ENCODE measurements at regions of chr3 and their contacts with region 1.

Region 1: GRCh38 chr3:52407779-52408178 is 37.1 kb downstream of the SEMA3G start:
- DNase-seq: no peak
- H3K4me3 Mint-ChIP-seq: peak overlapping the region; percentile 95
- H3K27ac Mint-ChIP-seq: peak overlapping the region; percentile 94
- H3K4me1 Mint-ChIP-seq: peaks cover 36% of the 10 kb centered on the region
- H3K27me3 Mint-ChIP-seq: no peaks in the 10 kb centered on the region

Region 2: DNA sequence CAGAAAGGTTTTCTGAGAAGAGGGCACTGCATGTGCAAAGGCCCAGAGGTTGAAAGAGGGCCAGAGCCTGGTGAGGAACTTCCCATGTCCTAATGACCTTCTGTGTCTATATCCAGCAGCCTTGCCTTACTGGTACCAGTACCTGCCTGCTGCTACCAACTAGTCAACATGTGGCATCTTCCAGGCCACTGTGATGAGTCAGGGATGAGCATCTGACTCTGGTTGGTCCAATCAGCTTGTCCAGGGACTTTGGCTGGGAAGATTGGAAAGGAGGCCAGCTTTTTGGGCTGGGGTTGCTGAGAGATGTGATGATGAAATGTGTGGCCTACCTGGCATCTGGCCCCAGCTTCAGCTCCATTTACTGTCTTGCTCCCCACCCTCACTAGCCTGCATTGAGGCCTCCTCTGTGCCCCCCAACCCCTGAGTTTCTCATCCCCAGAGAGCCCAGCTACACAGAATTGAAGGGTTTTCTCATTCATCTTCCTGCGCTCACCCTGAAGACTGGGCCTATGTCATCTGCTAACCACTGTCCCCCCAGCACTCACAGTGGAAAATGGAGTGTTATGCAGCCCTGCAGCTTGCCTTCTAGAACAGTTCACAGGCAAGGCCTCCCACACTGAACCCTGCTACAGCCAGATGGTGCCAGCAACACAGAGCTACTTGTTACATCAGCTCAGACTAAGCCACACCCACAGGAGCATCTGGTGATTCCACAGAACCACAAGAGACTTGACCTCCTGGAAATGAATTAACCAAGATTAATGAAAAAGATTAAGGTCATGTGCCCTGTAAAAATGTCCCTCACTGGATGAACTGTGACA is 167.5 kb before region 1 on chr3:
- intact Hi-C with region 1: no loop called
- DNase-seq: peak; percentile 86
- H3K4me3 Mint-ChIP-seq: peak overlapping the region; percentile 93
- H3K27ac Mint-ChIP-seq: peak overlapping the region; percentile 99
- H3K4me1 Mint-ChIP-seq: peaks cover 67% of the 10 kb centered on the region
- H3K27me3 Mint-ChIP-seq: no peaks in the 10 kb centered on the region

Region 3: DNA sequence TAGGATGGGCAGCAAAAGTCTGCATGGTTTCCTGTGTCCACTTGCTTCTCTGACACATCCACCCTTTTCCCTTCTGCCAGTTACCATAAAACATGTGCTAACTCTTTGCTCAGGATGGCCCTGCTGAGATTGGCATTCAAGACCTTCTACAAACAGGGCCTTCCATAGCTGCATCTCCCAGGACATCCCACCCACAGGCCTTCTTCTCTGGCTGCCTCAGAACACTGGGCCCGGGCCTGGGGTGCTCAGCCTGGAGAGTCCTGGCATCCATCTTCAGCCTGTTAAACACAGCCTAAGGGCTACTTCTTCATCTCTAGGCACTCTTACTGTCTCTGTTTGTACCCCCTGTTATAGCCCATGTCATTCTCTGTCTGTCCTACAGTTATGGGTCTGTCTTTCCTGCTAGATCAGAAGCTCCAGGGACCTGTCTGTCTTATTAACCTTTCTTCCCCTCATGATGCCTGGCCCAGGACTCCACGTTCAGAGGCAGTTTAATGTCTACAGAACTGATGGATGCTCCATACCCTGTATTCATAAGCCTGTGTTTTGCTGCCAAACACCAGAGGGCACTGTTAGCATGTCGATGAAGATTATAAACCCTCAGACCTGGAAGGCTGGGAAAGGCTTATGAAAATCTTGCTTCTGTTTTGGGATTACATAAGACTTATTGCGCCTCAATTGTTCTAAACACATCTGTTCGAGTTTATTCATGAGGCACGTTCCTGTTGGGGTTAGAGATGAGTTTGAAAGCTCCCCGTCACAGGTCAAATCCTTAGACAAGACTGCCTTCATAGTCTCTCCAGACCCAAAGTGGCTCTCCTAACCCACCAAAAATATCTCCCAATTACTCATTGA is 20.6 kb after region 1 on chr3:
- intact Hi-C with region 1: loop called (anchors 2 kb)
- DNase-seq: peak; percentile 82
- H3K4me3 Mint-ChIP-seq: no peak overlapping the region
- H3K27ac Mint-ChIP-seq: no peak overlapping the region
- H3K4me1 Mint-ChIP-seq: peaks cover 1% of the 10 kb centered on the region
- H3K27me3 Mint-ChIP-seq: peaks cover 17% of the 10 kb centered on the region

Region 4: DNA sequence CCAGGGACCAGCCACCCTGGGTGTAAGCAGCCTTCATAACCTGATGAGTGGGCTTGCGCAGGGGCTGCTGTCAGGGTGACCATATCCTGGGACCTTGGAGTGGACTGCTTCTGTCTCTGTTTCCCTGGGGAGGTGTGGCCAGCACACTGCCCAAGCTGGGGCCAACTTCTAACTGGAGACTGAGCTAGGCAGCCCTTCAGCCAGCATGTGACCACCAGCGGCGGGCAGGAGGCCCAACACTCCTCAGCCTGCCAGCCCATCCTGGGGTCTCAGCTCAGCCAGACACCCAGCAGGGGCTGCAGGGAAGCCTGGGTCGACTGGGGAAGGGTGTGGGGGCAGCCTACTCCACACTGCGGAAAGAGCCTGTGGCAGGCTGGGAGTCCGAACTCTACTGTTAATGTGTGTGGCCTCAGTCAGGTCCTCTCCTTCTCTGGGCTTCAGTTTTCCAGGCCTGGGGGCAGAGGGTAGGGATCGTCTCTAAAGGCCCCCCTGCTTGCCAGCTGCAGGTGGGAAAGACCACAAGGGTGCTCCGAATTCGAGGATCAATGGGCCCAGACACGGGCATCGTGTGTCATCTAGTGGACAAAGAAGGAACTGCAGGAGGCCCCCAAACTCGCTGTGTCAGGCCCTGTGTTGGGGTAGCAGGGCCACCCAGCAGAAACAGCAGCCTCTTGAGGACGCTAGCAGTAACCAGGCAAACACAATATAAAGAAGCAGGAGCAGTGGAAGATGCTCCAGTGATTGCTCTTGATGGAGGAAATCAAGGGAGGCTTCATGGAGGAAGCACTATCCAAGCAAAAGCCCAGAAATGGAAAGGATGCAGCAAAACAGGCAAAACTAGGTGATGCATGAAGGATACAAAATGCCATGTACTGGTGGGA is 39.1 kb after region 1 on chr3:
- intact Hi-C with region 1: loop called (anchors 1 kb)
- DNase-seq: peak; percentile 93
- H3K4me3 Mint-ChIP-seq: no peak overlapping the region
- H3K27ac Mint-ChIP-seq: peak overlapping the region; percentile 79
- H3K4me1 Mint-ChIP-seq: peaks cover 6% of the 10 kb centered on the region
- H3K27me3 Mint-ChIP-seq: no peaks in the 10 kb centered on the region

Region 5: DNA sequence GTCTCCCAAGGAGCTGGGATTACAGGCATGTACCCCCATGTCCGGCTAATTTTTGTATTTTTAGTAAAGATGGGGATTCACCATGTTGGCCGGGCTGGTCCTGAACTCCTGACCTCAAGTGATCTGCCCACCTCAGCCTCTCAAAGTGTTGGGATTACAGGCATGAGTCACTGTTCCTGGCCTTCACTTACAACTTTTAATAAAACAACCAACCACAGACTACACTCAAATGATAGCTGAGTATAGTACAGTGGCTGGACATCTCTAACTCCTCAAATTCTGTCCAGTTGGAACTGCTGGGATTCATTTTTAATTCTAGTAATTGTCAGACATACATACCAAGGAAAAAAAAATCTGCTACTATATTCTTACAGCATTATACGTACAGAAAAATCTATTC is 206.9 kb after region 1 on chr3:
- intact Hi-C with region 1: no loop called
- DNase-seq: no peak
- H3K4me3 Mint-ChIP-seq: no peak overlapping the region
- H3K27ac Mint-ChIP-seq: no peak overlapping the region
- H3K4me1 Mint-ChIP-seq: no peaks in the 10 kb centered on the region
- H3K27me3 Mint-ChIP-seq: no peaks in the 10 kb centered on the region

Measured in activated CD4-positive, alpha-beta T cell treated with anti-CD3 and anti-CD28 coated beads, Interleukin-2, amount 10 ng/mL, durations not matched to agents 24 days and 14 days (primary cell).